ENCODE measurements at regions of chr16 and their contacts with region 1.

Region 1: DNA sequence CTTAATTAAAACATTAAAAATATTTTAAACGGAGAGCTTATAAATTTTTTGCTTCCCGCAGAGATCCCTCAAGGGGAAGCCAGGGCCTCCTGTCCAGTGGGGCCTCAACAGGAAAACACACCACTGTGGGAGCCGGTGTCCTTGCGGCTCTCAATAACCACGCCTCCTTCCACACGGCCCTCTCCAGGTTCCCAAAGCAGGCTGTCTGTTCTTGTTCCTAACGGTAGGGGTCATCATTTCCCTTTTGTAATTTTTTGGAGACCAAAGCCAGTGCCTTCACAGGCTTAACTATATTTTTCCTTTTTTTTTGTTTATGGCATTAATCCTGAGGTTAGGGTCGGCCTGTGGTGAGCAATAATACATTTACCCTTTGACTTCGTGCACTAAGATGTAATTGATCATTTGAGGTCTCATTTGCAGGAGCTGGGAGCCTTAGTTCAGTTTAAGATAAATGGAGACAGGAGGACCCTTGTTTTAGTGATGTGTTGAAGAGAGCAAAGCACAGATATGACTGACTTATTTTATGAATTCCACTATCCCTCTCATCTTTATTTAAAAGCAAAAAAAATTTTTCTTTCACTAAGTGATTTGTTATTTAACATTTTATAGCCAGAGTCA is 77.5 kb upstream of the N4BP1 start:
- DNase-seq: peak; percentile 53
- ATAC-seq: peak; percentile 87

Region 2: DNA sequence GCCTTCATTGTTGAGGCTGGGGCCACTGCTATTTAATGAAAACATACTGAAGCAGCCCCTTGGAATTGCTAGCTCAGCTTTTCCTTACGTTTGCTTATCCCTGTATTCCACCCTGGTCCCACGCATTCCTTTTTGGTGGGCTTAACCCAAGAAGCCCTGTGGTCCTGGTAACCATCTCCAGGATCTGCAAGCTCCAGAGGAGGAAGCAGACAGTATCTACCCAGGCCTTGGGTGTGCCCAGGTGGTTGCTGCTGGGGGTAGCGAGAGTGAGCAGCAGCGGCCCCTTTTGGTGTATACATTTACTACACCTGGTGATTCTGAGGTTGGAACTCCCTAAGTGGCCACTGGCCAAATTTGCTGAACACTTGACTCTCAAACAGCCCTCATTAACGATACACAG is 496.4 kb after region 1 on chr16:
- intact Hi-C with region 1: loop called (anchors 10 kb)
- DNase-seq: peak; percentile 32
- ATAC-seq: peak; percentile 71

Region 3: GRCh38 chr16:49350265-49351095 is 663.0 kb after region 1 on chr16:
- intact Hi-C with region 1: loop called (anchors 2 kb)
- DNase-seq: peak; percentile 72
- ATAC-seq: peak; percentile 82